AG04450 (cell line): ENCODE measurements at regions of chr5 and their contacts with region 1.

Region 1: GRCh38 chr5:16992006-16992405 is 55.9 kb upstream of the MYO10 start:
- DNase-seq: no peak
- H3K4me3 ChIP-seq: no peak overlapping the region
- H3K27ac ChIP-seq: no peak overlapping the region
- H3K27me3 ChIP-seq: no peaks in the 10 kb centered on the region
- CTCF ChIP-seq: no peak

Region 2: GRCh38 chr5:16842896-16843295 is 149.1 kb before region 1 on chr5:
- CTCF ChIA-PET with region 1: no interaction called
- POLR2A ChIA-PET with region 1: no interaction called
- DNase-seq: no peak
- H3K4me3 ChIP-seq: no peak overlapping the region
- H3K27ac ChIP-seq: no peak overlapping the region
- H3K27me3 ChIP-seq: no peaks in the 10 kb centered on the region
- CTCF ChIP-seq: no peak

Region 3: DNA sequence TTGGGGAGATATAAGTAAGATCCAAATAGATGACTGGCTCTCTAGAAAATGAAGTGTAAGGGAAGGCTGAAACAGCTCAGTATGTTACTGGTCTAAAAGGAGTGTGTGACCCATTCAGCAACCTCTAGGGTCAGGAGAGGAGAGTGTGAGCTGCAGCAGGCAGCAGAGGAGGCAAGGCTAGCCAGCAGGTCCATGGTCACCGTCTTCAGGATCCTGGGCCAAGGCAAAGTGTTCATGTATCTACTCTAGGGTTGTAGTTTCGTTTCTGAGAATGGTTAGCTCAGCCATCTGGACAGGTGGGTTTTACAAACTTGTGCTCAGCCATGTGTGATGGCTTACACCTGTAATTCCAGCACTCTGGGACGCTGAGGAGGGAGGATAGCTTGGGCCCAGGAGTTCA is 69.6 kb before region 1 on chr5:
- CTCF ChIA-PET with region 1: no interaction called
- POLR2A ChIA-PET with region 1: no interaction called
- DNase-seq: no peak
- H3K4me3 ChIP-seq: no peak overlapping the region
- H3K27ac ChIP-seq: peak overlapping the region; percentile 21
- H3K27me3 ChIP-seq: no peaks in the 10 kb centered on the region
- CTCF ChIP-seq: no peak

Region 4: GRCh38 chr5:17089690-17090089 is 97.7 kb after region 1 on chr5:
- CTCF ChIA-PET with region 1: interaction called, 10 read pairs
- POLR2A ChIA-PET with region 1: no interaction called
- DNase-seq: no peak
- H3K4me3 ChIP-seq: no peak overlapping the region
- H3K27ac ChIP-seq: no peak overlapping the region
- H3K27me3 ChIP-seq: no peaks in the 10 kb centered on the region
- CTCF ChIP-seq: no peak

Region 5: DNA sequence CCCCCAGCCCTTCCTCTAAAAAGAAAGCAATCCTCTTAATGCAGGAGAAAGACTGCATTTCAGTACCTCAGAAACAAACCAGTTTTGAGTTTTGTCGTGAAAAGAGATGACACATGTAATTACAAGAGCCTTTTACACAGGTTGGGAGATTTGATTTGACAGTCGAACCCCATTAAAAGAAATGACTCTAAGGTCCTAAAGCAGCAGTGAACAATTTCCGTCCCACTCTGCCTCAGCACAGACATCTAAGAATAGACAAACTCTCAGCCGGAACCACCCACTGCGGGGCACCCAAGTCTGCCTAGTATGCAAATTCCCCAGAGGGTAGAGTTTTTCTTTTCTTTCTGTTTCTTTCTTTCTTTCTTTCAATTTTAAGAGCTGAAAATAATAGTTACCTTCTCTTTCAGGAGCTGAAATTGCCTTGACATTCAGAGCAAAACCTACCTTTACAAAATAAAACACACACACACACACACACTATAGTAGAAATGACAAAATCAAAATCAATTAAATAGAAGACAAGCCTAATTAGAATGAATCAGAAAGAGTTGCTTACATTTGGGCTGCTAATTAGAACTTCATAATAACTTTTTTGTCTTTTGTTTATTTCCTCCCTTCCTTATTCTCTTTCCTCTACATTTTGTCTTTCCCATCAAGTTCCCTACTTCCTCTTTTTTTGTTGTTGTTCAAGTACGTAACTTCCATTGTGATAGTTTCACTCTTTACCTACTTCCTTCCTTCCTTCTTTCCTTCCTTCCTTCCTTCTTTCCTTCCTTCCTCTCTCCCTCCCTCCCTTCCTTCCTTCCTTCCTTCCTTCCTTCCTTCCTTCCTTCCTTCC is 290.5 kb after region 1 on chr5:
- CTCF ChIA-PET with region 1: no interaction called
- POLR2A ChIA-PET with region 1: no interaction called
- DNase-seq: no peak
- H3K4me3 ChIP-seq: no peak overlapping the region
- H3K27ac ChIP-seq: no peak overlapping the region
- H3K27me3 ChIP-seq: no peaks in the 10 kb centered on the region
- CTCF ChIP-seq: no peak